Ovary (tissue), 10 donors: ENCODE measurements at regions of chr5 and their contacts with region 1.

Region 1: GRCh38 chr5:42767491-42768105 is 11.0 kb downstream of the CCDC152 start:
- DNase-seq: no peak
- H3K4me3 ChIP-seq: no peak overlapping the region
- H3K27ac ChIP-seq: no peak overlapping the region
- H3K4me1 ChIP-seq: no peaks in the 10 kb centered on the region
- H3K27me3 ChIP-seq: no peaks in the 10 kb centered on the region
- CTCF ChIP-seq: peak in 2 of 3 donors; percentile 14 to 48
- EP300 ChIP-seq: no peak
- POLR2A ChIP-seq: no peak

Region 2: GRCh38 chr5:41869739-41870626 is 897.6 kb before region 1 on chr5 and contains the start of gene OXCT1:
- intact Hi-C with region 1: loop called in 1 of 4 experiments (anchors 10 kb)
- DNase-seq: peak; percentile 75 to 88 (median 83)
- H3K4me3 ChIP-seq: peak within 1 kb of the TSS; percentile 70
- H3K27ac ChIP-seq: peak within 1 kb of the TSS; percentile 94 to 98
- H3K4me1 ChIP-seq: peaks cover 4% of the 10 kb centered on the region
- H3K27me3 ChIP-seq: no peaks in the 10 kb centered on the region
- CTCF ChIP-seq: no peak
- EP300 ChIP-seq: no peak
- POLR2A ChIP-seq: peak; percentile 72
- total RNA-seq, gene OXCT1: 9.0 to 20.9 (median 15.4) TPM

Region 3: DNA sequence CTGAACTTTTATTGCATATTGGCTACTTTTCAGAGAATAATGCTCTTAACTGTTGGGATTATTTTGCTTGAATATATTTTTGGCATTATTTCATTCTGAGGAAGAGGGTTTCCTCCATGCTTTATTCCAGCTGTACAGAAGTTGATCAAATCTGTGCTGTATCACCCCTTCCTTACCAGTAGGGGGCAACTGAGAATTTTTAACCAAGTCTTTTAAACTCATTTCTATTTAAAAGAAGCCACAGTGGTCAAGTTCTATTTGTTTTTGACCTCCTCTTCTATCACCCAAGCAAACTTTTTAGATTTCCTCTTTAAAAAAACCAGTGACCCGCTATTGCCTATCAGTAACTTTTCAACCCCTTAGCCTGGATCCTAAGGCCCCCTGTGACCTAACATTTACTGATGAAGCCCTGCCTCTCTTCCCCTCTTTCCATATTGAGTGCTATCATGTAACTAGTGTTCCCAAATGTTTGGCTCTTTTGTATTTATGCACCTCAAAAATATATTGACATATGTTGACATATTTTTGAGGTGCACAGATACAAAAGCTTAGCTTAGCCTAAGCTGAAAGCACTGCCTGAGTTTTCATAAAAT is 761.9 kb before region 1 on chr5:
- intact Hi-C with region 1: loop called in 2 of 4 experiments (anchors 5 to 10 kb)
- DNase-seq: no peak
- H3K4me3 ChIP-seq: no peak overlapping the region
- H3K27ac ChIP-seq: no peak overlapping the region
- H3K4me1 ChIP-seq: no peaks in the 10 kb centered on the region
- H3K27me3 ChIP-seq: no peaks in the 10 kb centered on the region
- CTCF ChIP-seq: peak in 1 of 3 donors; percentile 33
- EP300 ChIP-seq: no peak
- POLR2A ChIP-seq: no peak

Region 4: DNA sequence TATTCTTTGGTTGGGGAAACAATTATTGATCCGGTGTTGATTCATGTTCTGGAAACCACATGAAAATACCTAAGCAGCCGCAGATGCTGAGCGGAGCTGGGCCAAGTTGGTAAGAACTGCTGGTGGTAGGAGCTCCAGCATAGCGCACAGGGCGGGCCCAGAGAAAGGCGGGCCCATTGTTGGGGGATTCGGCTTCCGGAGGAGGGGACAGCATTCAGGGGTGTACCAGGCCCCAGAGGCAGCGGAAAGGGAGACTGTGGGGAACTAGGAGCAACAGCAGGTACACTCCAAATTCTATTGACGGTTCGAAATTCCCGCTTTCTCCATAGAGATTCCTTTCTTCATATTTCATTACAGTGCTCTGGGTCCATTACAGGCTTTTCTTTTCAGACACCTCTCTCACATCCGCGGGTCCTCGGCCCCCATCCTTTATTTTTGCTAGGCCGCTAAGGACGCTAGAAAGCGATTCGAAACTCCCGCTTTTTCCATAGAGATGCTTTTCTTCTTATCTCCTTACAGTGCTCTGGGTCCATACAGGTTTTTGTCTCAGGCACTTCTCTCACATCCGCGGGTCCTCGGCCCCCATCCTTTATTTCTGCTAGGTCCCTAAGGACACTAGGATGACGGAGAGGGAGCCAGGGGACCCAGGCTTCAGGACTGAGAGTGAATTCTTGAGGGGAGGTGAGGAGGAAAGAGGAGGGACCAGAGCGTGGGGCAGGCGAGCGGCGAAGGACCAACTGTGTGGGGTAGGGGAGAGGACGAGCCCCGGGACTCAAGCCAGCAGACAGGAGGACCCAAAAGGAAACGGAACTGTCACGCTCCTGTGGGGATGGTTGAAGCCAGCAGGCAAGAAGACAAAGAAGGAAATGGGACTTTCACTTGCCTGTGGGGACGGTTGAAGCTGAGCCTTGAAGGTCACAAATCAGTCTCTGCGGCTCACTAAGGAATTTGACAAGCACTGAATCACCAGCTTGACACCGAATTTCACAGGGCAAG is 10.7 kb before region 1 on chr5 and contains the start of gene CCDC152:
- intact Hi-C with region 1: no loop called
- DNase-seq: peak; percentile 20 to 48 (median 28)
- H3K4me3 ChIP-seq: peak within 1 kb of the TSS; percentile 14
- H3K27ac ChIP-seq: no peak within 1 kb of the TSS
- H3K4me1 ChIP-seq: peaks cover 2% of the 10 kb centered on the region
- H3K27me3 ChIP-seq: no peaks in the 10 kb centered on the region
- CTCF ChIP-seq: no peak
- EP300 ChIP-seq: no peak
- POLR2A ChIP-seq: no peak
- total RNA-seq, gene CCDC152: 1.7 to 5.5 (median 3.7) TPM

Region 5: DNA sequence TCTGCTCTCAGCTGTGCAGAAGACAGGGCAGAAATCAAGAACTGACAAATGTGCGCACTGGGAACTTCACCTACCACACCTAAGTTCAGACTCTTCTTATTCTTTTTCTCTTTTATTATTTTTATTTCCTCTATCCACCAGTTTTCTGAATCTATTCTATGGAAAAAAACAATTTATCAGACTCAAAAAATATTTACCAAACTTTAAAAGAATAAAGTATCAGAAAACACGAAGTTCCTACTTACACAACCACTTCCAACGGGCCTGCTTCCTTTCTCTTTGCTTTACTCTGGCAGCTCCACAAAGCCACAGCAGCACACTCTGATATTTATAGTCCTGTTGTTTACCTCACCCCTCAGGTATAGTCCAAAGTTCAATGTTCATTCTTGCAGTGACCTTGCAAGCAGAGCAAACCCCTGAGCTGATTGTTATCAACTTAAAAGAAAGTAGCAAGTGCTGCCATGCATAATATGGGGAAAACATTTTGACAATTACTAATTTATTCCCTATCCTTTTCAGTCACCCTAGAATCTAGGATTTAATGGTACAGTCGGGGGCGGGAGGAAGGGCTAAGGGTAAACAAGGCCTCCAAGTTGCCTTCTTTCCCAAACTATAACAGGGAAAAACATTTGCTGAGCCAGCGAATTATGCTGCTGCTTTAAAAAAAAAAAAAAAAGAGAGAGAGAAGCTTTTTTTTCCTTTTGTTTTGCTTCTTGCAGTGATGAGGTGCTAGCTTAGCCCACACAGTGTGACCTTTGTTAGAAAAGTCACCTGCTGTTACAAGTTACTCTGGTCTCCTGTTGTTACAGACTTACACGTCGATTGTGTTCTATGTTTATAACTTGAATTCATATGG is 44.2 kb after region 1 on chr5 and contains the start of gene SELENOP:
- intact Hi-C with region 1: no loop called
- DNase-seq: peak; percentile 67 to 84 (median 72)
- H3K4me3 ChIP-seq: peak within 1 kb of the TSS; percentile 47
- H3K27ac ChIP-seq: peak within 1 kb of the TSS; percentile 70 to 84
- H3K4me1 ChIP-seq: peaks cover 3% of the 10 kb centered on the region
- H3K27me3 ChIP-seq: no peaks in the 10 kb centered on the region
- CTCF ChIP-seq: no peak
- EP300 ChIP-seq: no peak
- POLR2A ChIP-seq: peak; percentile 86
- total RNA-seq, gene SELENOP: 339 to 764 (median 590) TPM

Region 6: GRCh38 chr5:43281840-43282658 is 514.5 kb after region 1 on chr5:
- intact Hi-C with region 1: no loop called
- DNase-seq: no peak
- H3K4me3 ChIP-seq: no peak overlapping the region
- H3K27ac ChIP-seq: no peak overlapping the region
- H3K4me1 ChIP-seq: no peaks in the 10 kb centered on the region
- H3K27me3 ChIP-seq: no peaks in the 10 kb centered on the region
- CTCF ChIP-seq: no peak
- EP300 ChIP-seq: no peak
- POLR2A ChIP-seq: no peak